Endothelial cell of umbilical vein (primary cell): ENCODE measurements at regions of chrX and their contacts with region 1.

Region 1: GRCh38 chrX:39613482-39613921 is 484.3 kb downstream of the BCOR start:
- DNase-seq: peak; percentile 48
- H3K4me3 ChIP-seq: peak overlapping the region; percentile 3 to 16 (median 7)
- H3K27ac ChIP-seq: no peak overlapping the region
- H3K4me1 ChIP-seq: peaks cover 4% of the 10 kb centered on the region
- H3K27me3 ChIP-seq: peaks cover 0 to 1% of the 10 kb centered on the region in 2 experiments
- CTCF ChIP-seq: no peak
- POLR2A ChIP-seq: no peak

Region 2: GRCh38 chrX:38458071-38458470 is 1155.4 kb before region 1 on chrX:
- CTCF ChIA-PET with region 1: no interaction called
- POLR2A ChIA-PET with region 1: no interaction called
- dilution Hi-C with region 1: no loop called
- intact Hi-C with region 1: no loop called
- DNase-seq: no peak
- H3K4me3 ChIP-seq: no peak overlapping the region
- H3K27ac ChIP-seq: no peak overlapping the region
- H3K4me1 ChIP-seq: no peaks in the 10 kb centered on the region
- H3K27me3 ChIP-seq: no peaks in the 10 kb centered on the region
- CTCF ChIP-seq: no peak
- POLR2A ChIP-seq: no peak

Region 3: GRCh38 chrX:38636949-38637819 is 976.3 kb before region 1 on chrX:
- CTCF ChIA-PET with region 1: no interaction called
- POLR2A ChIA-PET with region 1: no interaction called
- dilution Hi-C with region 1: no loop called
- intact Hi-C with region 1: no loop called
- DNase-seq: peak; percentile 80
- H3K4me3 ChIP-seq: no peak overlapping the region
- H3K27ac ChIP-seq: peak overlapping the region; percentile 11
- H3K4me1 ChIP-seq: peaks cover 11% of the 10 kb centered on the region
- H3K27me3 ChIP-seq: no peaks in the 10 kb centered on the region
- CTCF ChIP-seq: no peak
- POLR2A ChIP-seq: no peak

Region 4: DNA sequence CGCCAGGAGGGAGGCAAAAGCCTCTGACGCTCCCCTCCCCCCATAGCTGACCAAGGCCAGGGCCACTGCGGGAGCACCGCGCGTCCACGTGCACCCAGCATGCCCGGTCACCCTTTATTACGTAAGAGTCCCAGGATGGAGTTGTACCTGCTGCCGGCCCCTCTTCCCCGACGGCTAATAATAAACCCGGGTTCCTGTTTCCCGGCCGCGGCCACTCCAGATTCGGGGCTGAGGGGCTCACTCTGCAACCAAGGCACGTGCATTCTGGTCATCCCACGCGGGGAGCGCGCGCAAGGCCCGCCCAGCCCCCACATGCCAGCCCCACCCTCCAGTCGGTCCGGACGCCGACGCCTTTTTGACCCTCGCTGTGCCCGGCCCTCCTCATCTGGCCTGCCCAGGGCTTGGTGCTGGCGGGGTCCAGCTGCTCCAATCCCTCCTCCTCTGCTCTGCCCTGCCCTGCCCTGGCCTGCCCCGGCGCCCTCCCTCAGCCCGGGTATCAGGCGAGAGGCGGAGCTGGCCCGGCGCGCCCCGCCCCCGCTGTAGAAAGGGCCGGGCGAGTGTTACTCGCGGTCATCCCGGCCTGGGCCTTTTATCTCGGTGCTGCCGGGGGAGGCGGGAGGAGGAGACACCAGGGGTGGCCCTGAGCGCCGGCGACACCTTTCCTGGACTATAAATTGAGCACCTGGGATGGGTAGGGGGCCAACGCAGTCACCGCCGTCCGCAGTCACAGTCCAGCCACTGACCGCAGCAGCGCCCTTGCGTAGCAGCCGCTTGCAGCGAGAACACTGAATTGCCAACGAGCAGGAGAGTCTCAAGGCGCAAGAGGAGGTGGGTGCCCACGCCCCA is 809.7 kb before region 1 on chrX:
- CTCF ChIA-PET with region 1: no interaction called
- POLR2A ChIA-PET with region 1: no interaction called
- dilution Hi-C with region 1: no loop called
- intact Hi-C with region 1: loop called (anchors 10 kb)
- DNase-seq: peak; percentile 67
- H3K4me3 ChIP-seq: peak overlapping the region; percentile 52 to 85 (median 55)
- H3K27ac ChIP-seq: peak overlapping the region; percentile 82
- H3K4me1 ChIP-seq: peaks cover 15% of the 10 kb centered on the region
- H3K27me3 ChIP-seq: no peaks in the 10 kb centered on the region
- CTCF ChIP-seq: no peak
- POLR2A ChIP-seq: peak; percentile 37

Region 5: GRCh38 chrX:39418731-39419638 is 194.5 kb before region 1 on chrX:
- CTCF ChIA-PET with region 1: no interaction called
- POLR2A ChIA-PET with region 1: no interaction called
- dilution Hi-C with region 1: no loop called
- intact Hi-C with region 1: loop called (anchors 10 kb)
- DNase-seq: peak; percentile 73
- H3K4me3 ChIP-seq: no peak overlapping the region
- H3K27ac ChIP-seq: peak overlapping the region; percentile 91
- H3K4me1 ChIP-seq: peaks cover 25% of the 10 kb centered on the region
- H3K27me3 ChIP-seq: no peaks in the 10 kb centered on the region
- CTCF ChIP-seq: no peak
- POLR2A ChIP-seq: no peak